ENCODE measurements at regions of chr6 and their contacts with region 1.

Region 1: DNA sequence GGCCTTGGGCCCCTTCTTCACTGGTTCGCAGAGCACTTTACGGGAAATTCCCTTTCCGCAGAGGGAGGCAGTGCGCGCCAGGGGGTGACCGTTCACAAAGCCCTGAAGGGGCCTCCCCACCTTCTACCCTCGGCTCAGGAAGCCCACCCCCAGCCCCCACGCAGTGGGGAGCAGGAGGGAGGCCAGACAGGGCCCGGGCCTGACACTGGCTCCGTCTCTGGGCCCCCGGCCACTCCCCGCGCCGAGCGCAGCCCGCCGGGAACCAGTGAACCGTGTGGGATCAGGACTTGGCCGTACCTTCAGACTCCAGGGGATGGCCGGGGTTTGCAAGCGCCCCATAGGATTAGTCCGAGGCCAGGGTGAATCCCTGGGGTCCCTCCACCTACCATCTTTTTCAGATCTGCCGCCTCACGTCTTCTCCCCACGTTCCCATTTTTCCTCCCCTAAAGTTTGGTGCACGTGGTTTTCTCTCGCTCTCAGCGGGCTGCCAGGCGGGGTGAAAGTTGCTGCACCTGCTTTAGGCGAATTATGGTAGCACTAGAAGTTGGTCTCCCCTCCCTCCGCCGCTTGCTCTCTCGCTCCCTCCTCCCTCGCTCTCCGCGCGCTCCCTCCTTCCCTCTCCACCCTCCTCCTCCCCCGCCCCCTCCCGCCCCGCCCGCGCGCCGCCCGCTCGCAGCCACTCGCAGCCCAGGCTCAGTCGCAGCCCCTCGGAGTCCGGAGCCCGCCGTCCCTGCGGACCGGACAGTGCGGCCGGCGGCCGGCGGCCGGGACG is at the start of gene FOXP4:
- DNase-seq: peak; percentile 95
- ATAC-seq: peak; percentile 89
- H3K4me3 ChIP-seq: peak within 1 kb of the TSS; percentile 93
- H3K27ac ChIP-seq: peak within 1 kb of the TSS; percentile 34; the same call in 1 of the 2 replicates
- H3K4me1 ChIP-seq: peaks cover 8% of the 10 kb centered on the region
- H3K27me3 ChIP-seq: peaks cover 6% of the 10 kb centered on the region; the same call in 1 of the 2 replicates
- CTCF ChIP-seq: no peak
- POLR2A ChIP-seq: no peak
- RAD21 ChIP-seq: no peak
- total RNA-seq, gene FOXP4: 0.72 and 0.83 TPM in 2 replicates

Region 2: GRCh38 chr6:41424370-41425058 is 121.4 kb before region 1 on chr6:
- CTCF ChIA-PET with region 1: no interaction called
- POLR2A ChIA-PET with region 1: no interaction called
- dilution Hi-C with region 1: no loop called
- in situ Hi-C with region 1: no loop called
- intact Hi-C with region 1: loop called (anchors 2 kb)
- DNase-seq: peak; percentile 71
- ATAC-seq: peak; percentile 91
- H3K4me3 ChIP-seq: no peak overlapping the region
- H3K27ac ChIP-seq: no peak overlapping the region
- H3K4me1 ChIP-seq: 0 out of 2 replicates have a peak, but pooled peaks cover 1% of the 10 kb centered on the region
- H3K27me3 ChIP-seq: peaks cover 68% of the 10 kb centered on the region
- CTCF ChIP-seq: peak; percentile 85
- POLR2A ChIP-seq: no peak
- RAD21 ChIP-seq: peak; percentile 78

Region 3: DNA sequence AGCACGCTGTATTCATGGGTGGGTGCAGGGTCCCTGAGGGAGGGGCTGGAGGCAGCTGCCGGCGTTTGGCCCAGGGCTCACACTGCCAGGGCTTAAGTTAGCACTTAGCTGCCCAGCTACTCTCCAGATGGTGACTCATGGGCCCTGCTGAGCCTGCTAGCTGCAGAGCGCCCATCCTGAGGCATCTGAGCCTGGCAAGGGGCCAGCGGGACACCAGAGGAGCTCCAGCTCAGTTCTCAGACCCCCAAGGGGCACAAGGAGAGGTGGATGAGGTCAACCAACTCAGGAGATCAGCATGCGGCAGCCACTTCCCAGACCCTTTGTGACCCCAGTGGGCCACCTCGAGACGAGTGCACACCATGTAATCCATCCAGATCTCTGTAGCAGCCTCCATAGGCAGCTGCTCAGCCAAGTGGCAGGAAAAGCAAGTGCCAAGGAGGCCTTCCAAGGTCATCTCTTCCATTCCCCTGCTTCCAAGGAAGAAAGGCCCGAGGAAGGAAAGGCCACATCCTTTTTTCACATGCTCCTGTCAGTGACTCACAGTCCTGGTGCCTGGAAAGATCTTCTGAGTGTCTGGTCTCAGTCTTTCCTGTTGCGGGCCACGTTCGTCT is 35.6 kb after region 1 on chr6:
- CTCF ChIA-PET with region 1: no interaction called
- POLR2A ChIA-PET with region 1: no interaction called
- dilution Hi-C with region 1: no loop called
- in situ Hi-C with region 1: no loop called
- intact Hi-C with region 1: loop called (anchors 2 kb)
- DNase-seq: peak; percentile 89
- ATAC-seq: peak; percentile 83
- H3K4me3 ChIP-seq: no peak overlapping the region
- H3K27ac ChIP-seq: peak overlapping the region; percentile 47
- H3K4me1 ChIP-seq: peaks cover 32% of the 10 kb centered on the region
- H3K27me3 ChIP-seq: no peaks in the 10 kb centered on the region
- CTCF ChIP-seq: no peak
- POLR2A ChIP-seq: no peak
- RAD21 ChIP-seq: peak; percentile 10; the same call in 1 of the 2 replicates